Activated CD4-positive, alpha-beta memory T cell treated with anti-CD3 and anti-CD28 coated beads, Interleukin-2, amount 10 ng/mL, durations not matched to agents 7 days and 5 days (primary cell): ENCODE measurements at regions of chr9 and their contacts with region 1.

Region 1: GRCh38 chr9:133030317-133031129 is at the start of gene GTF3C5:
- DNase-seq: peak; percentile 94
- H3K4me3 Mint-ChIP-seq: peak within 1 kb of the TSS; percentile 85
- H3K27ac Mint-ChIP-seq: peak within 1 kb of the TSS; percentile 90
- H3K4me1 Mint-ChIP-seq: peaks cover 46% of the 10 kb centered on the region
- H3K27me3 Mint-ChIP-seq: no peaks in the 10 kb centered on the region
- total RNA-seq, gene GTF3C5: 66.8 to 67.3 TPM

Region 2: DNA sequence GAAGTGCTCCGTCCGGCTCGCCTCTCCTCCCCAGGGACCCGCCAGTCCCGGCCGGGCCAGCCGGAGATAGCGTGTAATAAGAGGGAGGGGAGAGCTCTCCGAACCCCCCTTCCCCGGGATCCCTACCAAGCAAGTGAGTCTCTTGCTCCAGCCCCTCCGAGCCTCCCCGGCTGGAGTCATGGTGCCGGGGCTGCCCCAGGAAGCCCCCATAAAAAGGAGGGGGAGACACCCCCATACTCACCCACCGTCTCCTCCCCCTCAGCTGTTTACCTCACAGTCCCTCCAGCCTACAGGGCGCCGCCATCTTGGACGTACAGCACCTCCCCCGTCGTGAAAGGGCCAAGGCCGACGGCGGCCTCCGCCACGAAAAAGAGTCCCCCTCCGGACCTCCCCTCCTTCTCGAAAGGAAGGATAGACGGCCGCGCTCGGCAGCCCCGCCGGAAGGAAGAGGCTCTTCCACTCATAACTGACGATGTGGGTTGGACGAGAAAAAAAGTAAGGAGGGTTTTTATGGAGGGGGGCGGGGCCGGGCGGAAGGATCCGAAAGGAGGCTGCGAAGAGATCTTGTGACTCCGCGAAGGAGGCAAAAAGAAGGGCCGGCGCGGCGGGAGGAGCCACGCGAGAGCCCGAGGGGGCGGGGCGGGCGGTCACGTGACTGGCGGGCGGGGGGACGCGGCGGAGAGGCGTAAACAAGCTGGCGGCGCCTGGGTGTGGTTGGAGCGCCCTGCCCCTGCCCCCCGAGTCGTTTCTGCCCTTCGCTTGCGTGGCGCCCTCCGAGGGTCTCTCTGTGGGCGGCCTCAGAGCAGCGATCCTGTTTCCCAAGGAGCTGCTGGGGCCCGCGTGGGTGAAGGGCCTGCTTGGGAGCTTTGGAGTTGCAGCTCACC is 86.0 kb before region 1 on chr9 and contains the start of gene TSC1:
- CTCF ChIA-PET with region 1: interaction called, 3 read pairs
- POLR2A ChIA-PET with region 1: interaction called, 27 read pairs
- DNase-seq: peak; percentile 98
- H3K4me3 Mint-ChIP-seq: peak within 1 kb of the TSS; percentile 91
- H3K27ac Mint-ChIP-seq: peak within 1 kb of the TSS; percentile 98
- H3K4me1 Mint-ChIP-seq: peaks cover 26% of the 10 kb centered on the region
- H3K27me3 Mint-ChIP-seq: no peaks in the 10 kb centered on the region
- total RNA-seq, gene TSC1: 30.0 to 31.0 TPM

Region 3: DNA sequence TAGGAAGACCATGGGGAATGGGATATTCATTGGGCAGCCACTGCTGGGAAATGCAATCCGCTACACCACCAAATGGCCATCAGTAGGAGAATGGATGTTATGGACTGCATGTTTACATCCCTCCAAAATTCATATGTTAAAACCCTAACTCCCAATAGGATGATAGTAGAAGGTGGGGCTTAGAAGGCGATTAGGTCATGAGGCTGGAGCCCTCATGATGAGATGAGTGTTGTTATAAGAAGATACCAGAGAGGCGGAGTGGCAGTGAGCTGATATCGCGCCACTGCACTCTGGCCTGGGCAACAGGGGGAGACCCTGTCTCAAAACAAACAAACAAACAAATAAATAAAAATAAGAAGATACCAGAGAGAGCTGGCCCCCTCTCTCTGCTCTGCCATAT is 15.8 kb before region 1 on chr9:
- CTCF ChIA-PET with region 1: no interaction called
- POLR2A ChIA-PET with region 1: no interaction called
- DNase-seq: no peak
- H3K4me3 Mint-ChIP-seq: no peak overlapping the region
- H3K27ac Mint-ChIP-seq: no peak overlapping the region
- H3K4me1 Mint-ChIP-seq: no peaks in the 10 kb centered on the region
- H3K27me3 Mint-ChIP-seq: peaks cover 28% of the 10 kb centered on the region

Region 4: DNA sequence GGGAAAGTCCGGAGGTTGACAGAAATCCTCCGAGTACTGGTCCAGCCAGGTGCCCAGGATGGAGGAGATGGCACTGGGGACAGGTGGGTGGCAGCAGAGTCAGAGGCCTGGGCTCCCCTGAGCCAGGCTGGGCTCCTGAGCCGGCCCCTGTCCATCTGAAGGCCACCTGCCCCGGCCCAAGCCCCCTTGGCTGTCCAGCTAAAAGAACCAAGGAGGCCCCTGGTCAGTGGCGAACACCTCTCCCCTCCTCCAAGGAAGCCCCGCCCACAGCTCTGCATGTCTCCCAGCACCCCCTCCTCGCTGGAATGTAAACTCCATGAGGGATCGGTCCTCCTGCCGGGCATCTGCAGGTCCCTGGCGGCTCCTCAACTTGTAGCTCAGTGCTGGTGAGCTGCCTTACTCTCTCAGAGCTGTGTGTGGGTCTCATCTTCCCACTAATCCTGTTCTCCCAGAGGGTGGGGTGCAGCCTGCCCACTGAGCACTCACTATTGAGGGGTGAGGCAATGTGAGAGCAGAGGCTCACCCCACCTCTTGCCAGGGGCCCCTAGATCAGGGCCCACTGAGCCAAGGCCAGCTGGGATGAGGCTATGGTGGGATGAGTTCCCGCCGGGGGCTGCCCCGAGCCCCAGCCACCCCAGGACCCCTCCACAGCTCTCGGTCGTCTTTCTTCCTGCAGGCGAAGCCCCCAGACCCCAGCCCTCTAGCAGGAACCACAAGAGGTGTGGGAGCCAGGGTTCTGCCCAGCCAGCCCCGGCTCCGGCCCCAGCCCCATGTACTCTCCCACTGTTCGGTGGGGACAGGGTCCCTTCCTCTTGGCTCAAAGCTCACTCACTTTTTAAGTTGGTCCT is 78.5 kb after region 1 on chr9:
- CTCF ChIA-PET with region 1: no interaction called
- POLR2A ChIA-PET with region 1: interaction called, 10 read pairs
- DNase-seq: no peak
- H3K4me3 Mint-ChIP-seq: no peak overlapping the region
- H3K27ac Mint-ChIP-seq: no peak overlapping the region
- H3K4me1 Mint-ChIP-seq: peaks cover 23% of the 10 kb centered on the region
- H3K27me3 Mint-ChIP-seq: no peaks in the 10 kb centered on the region

Region 5: DNA sequence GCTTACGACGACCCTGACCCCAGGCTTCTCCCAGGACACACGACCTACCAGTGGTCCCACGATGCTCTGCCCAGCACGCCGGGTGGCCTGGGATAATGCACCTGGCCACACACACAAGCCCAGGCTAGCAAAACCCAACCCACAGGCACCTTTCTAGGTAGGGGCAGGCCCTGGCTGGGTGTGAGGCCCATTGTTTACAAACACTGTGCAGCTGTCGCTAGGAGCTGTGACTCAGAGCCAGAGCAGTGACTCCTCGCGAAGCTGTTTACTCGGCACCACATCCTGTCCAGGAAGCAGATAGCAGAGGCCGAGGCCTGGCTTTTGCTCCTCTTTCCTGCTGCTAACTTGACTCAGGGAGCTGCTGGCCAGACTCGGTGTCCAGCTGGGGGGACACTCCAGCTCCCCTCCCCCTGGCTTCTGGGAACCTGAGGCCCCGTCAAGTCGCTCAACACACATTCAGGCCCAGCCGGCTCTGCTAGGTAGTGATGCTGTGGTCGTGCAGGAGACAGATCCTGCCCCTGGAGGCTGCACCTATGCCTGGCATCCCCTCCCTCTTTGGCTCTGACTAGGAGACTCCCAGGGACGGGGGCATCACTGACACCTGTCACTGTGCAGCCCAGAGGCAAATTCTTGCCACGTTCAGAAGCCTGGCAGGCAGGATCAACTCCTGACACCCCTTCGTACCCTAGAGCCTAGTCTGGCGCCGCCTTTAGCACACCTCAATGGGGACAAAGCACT is 103.3 kb after region 1 on chr9:
- CTCF ChIA-PET with region 1: interaction called, 3 read pairs
- POLR2A ChIA-PET with region 1: interaction called, 18 read pairs
- DNase-seq: peak; percentile 94
- H3K4me3 Mint-ChIP-seq: peak overlapping the region; percentile 36
- H3K27ac Mint-ChIP-seq: peak overlapping the region; percentile 99
- H3K4me1 Mint-ChIP-seq: peaks cover 88% of the 10 kb centered on the region
- H3K27me3 Mint-ChIP-seq: no peaks in the 10 kb centered on the region

Region 6: GRCh38 chr9:133347985-133348717 is 317.6 kb after region 1 on chr9 and contains the starts of genes MED22 and RPL7A:
- CTCF ChIA-PET with region 1: no interaction called
- POLR2A ChIA-PET with region 1: interaction called, 11 read pairs
- DNase-seq: peak; percentile 95
- H3K4me3 Mint-ChIP-seq: peak within 1 kb of the TSS; percentile 95
- H3K27ac Mint-ChIP-seq: peak within 1 kb of the TSS; percentile 86
- H3K4me1 Mint-ChIP-seq: peaks cover 54% of the 10 kb centered on the region
- H3K27me3 Mint-ChIP-seq: no peaks in the 10 kb centered on the region
- total RNA-seq, gene MED22: 21.1 to 23.3 TPM
- total RNA-seq, gene RPL7A: 1,627 to 1,632 TPM